Cardiac septum (tissue), 1 donor: ENCODE measurements at regions of chr13 and their contacts with region 1.

Region 1: DNA sequence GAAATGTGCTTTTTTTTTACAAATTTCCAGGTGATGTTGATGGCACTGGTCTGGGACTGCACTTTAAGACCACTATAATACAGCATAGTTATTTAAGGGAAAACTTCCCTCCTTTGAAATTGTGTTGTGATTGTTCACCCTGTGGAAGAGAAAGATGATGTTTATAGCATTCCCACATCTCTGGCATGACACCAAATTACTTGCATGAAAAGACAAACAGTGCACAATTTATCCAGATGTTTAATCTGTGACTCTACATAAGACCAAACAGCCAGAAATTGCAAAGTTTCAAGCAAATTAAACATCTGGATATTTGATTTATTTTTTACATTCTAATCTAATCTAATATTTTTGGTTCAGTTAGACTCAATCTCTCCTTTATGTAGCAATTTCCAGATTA is 51.6 kb downstream of the UFM1 start:
- DNase-seq: no peak

Region 2: DNA sequence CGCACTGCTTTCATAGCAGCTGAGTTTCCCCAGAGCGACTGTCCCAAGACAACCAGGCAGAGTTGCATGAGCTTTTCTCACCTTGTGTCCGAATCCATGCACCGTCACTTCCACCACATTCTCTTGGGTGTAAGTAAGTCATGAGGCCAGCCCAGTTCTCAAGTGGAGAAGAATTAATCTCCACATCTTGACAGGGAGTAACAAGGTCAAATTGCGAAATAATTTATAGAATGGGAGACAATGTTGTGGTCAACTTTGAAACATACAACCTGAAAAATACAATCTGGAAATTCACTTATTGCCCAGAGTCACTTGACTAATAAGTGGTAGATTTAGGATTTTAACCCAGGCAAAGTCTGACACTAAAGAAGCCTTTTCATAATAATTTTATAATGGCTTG is 72.0 kb after region 1 on chr13:
- intact Hi-C with region 1: loop called (anchors 2 kb)
- DNase-seq: no peak